Astrocyte of the spinal cord (primary cell): ENCODE measurements at regions of chr12 and their contacts with region 1.

Region 1: DNA sequence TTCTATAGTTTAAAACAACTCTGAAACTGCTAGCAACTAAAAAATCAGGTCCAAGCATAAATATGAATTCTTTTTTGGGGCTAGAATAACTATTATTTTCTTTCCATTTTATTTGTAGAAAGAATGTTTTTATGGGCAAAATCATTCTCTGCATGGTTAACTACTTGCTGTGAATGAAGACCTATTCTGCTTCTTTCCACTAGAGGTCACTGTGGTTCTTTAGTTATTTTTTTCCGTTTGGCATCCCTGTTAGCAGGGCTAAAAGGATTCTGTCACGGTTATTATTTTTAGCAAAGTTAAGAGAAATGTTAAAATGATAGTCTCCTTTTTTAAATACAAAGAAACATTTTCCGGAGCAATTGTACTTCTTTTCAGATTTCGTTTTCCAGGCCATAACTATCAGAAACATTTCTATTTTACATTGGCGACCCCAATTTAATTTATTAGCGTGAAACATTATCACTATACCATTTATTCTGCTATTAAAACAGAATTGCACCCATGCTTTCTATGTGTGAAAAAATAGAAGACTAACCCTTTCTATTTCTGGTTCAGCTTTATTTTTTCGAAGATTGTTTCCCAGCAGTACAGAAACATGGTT is 404.8 kb downstream of the ATP23 start:
- DNase-seq: peak; percentile 67
- H3K4me3 ChIP-seq: no peak overlapping the region
- CTCF ChIP-seq: peak; percentile 70

Region 2: GRCh38 chr12:58540480-58541299 is 194.6 kb after region 1 on chr12:
- in situ Hi-C with region 1: loop called (anchors 25 kb)
- DNase-seq: peak; percentile 91
- H3K4me3 ChIP-seq: no peak overlapping the region
- CTCF ChIP-seq: peak; percentile 92